B cell (primary cell): ENCODE measurements at regions of chr17 and their contacts with region 1.

Region 1: GRCh38 chr17:74659898-74660297 is 36.4 kb upstream of the CD300E start:
- DNase-seq: no peak
- ATAC-seq: no peak
- H3K4me3 ChIP-seq: no peak overlapping the region
- H3K4me3 Mint-ChIP-seq: no peak overlapping the region
- H3K27ac ChIP-seq: no peak overlapping the region
- H3K27ac Mint-ChIP-seq: no peak overlapping the region
- H3K4me1 ChIP-seq: peaks cover 3 to 5% of the 10 kb centered on the region in 2 donors
- H3K4me1 Mint-ChIP-seq: peaks cover 8% of the 10 kb centered on the region
- H3K27me3 ChIP-seq: peaks cover 0 to 8% (median 2%) of the 10 kb centered on the region in 4 experiments
- H3K27me3 Mint-ChIP-seq: peaks cover 54% of the 10 kb centered on the region
- CTCF ChIP-seq: no peak

Region 2: GRCh38 chr17:73591296-73592078 is 1068.4 kb before region 1 on chr17:
- CTCF ChIA-PET with region 1: no interaction called
- POLR2A ChIA-PET with region 1: interaction called, 10 read pairs
- intact Hi-C with region 1: no loop called
- DNase-seq: peak; percentile 76
- ATAC-seq: peak; percentile 78
- H3K4me3 ChIP-seq: peak overlapping the region in 4 of 5 experiments; percentile 32 to 59 (median 44)
- H3K4me3 Mint-ChIP-seq: peak overlapping the region; percentile 88
- H3K27ac ChIP-seq: peak overlapping the region; percentile 87 to 97
- H3K27ac Mint-ChIP-seq: peak overlapping the region; percentile 97
- H3K4me1 ChIP-seq: peaks cover 100% of the 10 kb centered on the region in 2 donors
- H3K4me1 Mint-ChIP-seq: peaks cover 98% of the 10 kb centered on the region
- H3K27me3 ChIP-seq: no peaks in the 10 kb centered on the region
- H3K27me3 Mint-ChIP-seq: no peaks in the 10 kb centered on the region
- CTCF ChIP-seq: no peak

Region 3: DNA sequence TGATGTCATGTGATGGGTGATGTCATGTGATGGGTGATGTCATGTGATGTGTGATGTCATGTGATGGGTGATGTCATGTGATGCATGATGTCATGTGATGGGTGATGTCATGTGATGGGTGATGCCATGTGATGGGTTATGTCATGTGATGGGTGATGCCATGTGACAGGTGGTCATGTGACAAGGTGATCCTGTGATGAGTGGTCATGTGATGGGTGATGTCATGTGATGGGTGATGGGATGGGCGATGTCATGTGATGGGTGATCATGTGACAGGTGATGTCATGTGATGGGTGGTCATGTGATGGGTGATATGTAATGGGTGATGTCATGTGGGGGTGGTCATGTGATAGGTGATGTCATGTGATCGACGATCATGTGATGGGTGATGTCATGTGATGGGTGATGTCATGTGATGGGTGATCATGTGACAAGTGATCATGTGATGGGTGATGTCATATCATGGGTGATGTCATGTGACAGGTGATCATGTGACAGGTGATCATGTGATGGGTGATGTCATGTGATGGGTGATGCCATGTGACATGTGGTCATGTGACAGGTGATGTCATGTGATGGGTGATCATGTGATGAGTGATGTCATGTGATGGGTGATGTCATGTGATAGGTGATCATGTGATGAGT is 145.8 kb before region 1 on chr17:
- CTCF ChIA-PET with region 1: no interaction called
- POLR2A ChIA-PET with region 1: no interaction called
- intact Hi-C with region 1: no loop called
- DNase-seq: peak; percentile 91
- ATAC-seq: no peak
- H3K4me3 ChIP-seq: no peak overlapping the region
- H3K4me3 Mint-ChIP-seq: peak overlapping the region; percentile 26
- H3K27ac ChIP-seq: peak overlapping the region in 1 of 2 donors; percentile 74
- H3K27ac Mint-ChIP-seq: peak overlapping the region; percentile 96
- H3K4me1 ChIP-seq: peaks cover 14 to 17% of the 10 kb centered on the region in 2 donors
- H3K4me1 Mint-ChIP-seq: peaks cover 17% of the 10 kb centered on the region
- H3K27me3 ChIP-seq: peaks cover 0 to 9% (median 2%) of the 10 kb centered on the region in 4 experiments
- H3K27me3 Mint-ChIP-seq: no peaks in the 10 kb centered on the region
- CTCF ChIP-seq: no peak

Region 4: GRCh38 chr17:74639704-74640151 is 20.2 kb before region 1 on chr17:
- CTCF ChIA-PET with region 1: interaction called, 14 read pairs
- POLR2A ChIA-PET with region 1: no interaction called
- intact Hi-C with region 1: no loop called
- DNase-seq: peak; percentile 71
- ATAC-seq: peak; percentile 70
- H3K4me3 ChIP-seq: peak overlapping the region in 4 of 5 experiments; percentile 3 to 42 (median 9)
- H3K4me3 Mint-ChIP-seq: peak overlapping the region; percentile 79
- H3K27ac ChIP-seq: peak overlapping the region; percentile 38 to 41
- H3K27ac Mint-ChIP-seq: peak overlapping the region; percentile 83
- H3K4me1 ChIP-seq: peaks cover 83 to 85% of the 10 kb centered on the region in 2 donors
- H3K4me1 Mint-ChIP-seq: peaks cover 77% of the 10 kb centered on the region
- H3K27me3 ChIP-seq: peaks cover 0 to 13% (median 2%) of the 10 kb centered on the region in 4 experiments
- H3K27me3 Mint-ChIP-seq: peaks cover 8% of the 10 kb centered on the region
- CTCF ChIP-seq: no peak

Region 5: DNA sequence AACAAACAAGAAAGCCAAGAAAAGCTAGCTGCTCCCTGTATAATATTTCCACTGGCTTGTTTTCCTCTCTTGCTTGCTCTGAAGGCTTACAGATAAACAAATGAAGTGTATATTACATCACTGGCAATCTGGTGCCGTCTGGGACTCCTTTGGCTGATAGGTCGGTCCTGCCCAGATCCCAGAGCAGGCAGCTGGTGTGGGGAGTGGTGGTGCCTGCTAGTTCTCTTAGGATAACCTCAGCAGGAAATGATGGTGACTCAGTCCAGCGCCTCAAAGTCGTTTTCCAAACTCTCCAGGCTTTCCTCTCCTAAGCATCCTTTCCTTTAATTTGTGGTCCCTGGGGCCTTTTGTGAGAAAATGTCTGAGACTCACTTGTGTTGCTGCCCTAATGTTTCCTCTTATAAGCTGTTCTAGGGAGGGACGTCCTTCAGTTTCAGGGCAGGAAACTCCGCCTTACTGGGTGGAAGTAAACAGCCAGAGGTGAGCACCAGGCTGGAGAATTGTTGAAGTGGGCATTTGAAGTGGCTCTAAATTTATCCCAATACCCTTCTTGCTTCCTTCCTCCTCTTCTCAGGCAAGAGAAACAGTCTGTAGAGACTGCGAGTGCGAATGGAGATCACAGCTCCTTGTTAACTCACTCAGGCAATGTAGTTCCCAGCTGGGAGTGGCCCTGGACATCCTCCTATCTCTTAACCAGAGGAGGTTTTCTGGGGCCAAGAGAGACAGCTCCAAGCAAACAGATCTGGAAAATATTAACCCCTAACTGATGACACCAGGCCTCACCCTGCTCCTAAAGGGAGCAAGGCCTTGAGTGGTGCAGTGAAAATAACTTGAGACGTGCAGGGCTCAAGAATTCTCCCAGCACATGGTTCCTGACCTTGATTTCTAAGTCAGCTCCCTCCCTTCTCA is 17.9 kb after region 1 on chr17:
- CTCF ChIA-PET with region 1: interaction called, 33 read pairs
- POLR2A ChIA-PET with region 1: interaction called, 5 read pairs
- intact Hi-C with region 1: no loop called
- DNase-seq: peak; percentile 24
- ATAC-seq: peak; percentile 21
- H3K4me3 ChIP-seq: peak overlapping the region in 1 of 5 experiments; percentile 2
- H3K4me3 Mint-ChIP-seq: peak overlapping the region; percentile 58
- H3K27ac ChIP-seq: no peak overlapping the region
- H3K27ac Mint-ChIP-seq: peak overlapping the region; percentile 71
- H3K4me1 ChIP-seq: peaks cover 22 to 23% of the 10 kb centered on the region in 2 donors
- H3K4me1 Mint-ChIP-seq: peaks cover 27% of the 10 kb centered on the region
- H3K27me3 ChIP-seq: peaks cover 0 to 28% (median 12%) of the 10 kb centered on the region in 4 experiments
- H3K27me3 Mint-ChIP-seq: peaks cover 33% of the 10 kb centered on the region
- CTCF ChIP-seq: no peak

Region 6: GRCh38 chr17:74742153-74742515 is 82.2 kb after region 1 on chr17:
- CTCF ChIA-PET with region 1: interaction called, 344 read pairs
- POLR2A ChIA-PET with region 1: interaction called, 55 read pairs
- intact Hi-C with region 1: no loop called
- DNase-seq: peak; percentile 67
- ATAC-seq: peak; percentile 56
- H3K4me3 ChIP-seq: peak overlapping the region in 2 of 5 experiments; percentile 21 to 34
- H3K4me3 Mint-ChIP-seq: peak overlapping the region; percentile 82
- H3K27ac ChIP-seq: peak overlapping the region; percentile 42 to 62
- H3K27ac Mint-ChIP-seq: peak overlapping the region; percentile 96
- H3K4me1 ChIP-seq: peaks cover 69 to 82% of the 10 kb centered on the region in 2 donors
- H3K4me1 Mint-ChIP-seq: peaks cover 71% of the 10 kb centered on the region
- H3K27me3 ChIP-seq: no peaks in the 10 kb centered on the region
- H3K27me3 Mint-ChIP-seq: no peaks in the 10 kb centered on the region
- CTCF ChIP-seq: no peak

Region 7: DNA sequence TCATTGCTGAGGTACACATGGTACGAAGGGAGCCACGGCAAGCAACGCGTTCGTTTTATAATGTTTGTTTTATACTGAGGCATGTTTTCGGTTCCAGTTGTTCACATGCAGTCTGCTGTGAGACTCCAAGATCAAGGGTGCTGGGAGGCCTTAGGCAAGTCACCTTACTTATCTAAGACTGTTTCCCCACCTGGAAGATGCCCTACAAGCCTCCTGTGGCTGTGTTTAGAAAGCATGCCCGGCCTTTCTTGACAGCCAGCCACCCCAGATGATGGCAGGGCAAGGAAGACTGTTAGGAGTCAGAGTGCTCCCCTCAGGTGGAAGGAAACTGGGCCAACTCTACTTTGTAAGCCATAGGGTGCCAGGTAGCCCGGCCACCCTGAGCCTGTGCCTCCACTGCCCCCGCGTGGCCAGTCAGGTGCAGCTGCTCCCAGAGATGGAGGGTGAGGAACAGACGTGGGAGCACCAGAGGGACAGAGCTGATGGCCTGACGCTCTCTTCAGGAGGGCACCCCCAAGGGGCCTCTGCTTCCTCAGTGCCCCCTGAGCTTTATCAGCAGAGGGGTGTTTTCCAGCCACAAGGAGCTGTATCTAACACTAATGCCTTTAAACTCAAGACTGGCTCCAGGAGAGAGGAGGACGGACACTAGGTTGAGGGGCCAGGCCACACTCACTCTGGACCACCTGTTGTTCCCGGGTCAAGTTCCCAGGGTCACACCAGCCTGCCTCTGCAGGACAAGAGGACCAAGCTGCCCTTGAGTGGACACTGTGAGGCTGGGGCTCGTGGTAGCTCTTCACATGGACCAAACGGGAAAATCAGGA is 110.8 kb after region 1 on chr17:
- CTCF ChIA-PET with region 1: interaction called, 191 read pairs
- POLR2A ChIA-PET with region 1: interaction called, 5 read pairs
- intact Hi-C with region 1: loop called (anchors 1 kb)
- DNase-seq: peak; percentile 78
- ATAC-seq: peak; percentile 94
- H3K4me3 ChIP-seq: no peak overlapping the region
- H3K4me3 Mint-ChIP-seq: no peak overlapping the region
- H3K27ac ChIP-seq: no peak overlapping the region
- H3K27ac Mint-ChIP-seq: peak overlapping the region; percentile 50
- H3K4me1 ChIP-seq: peaks cover 6 to 7% of the 10 kb centered on the region in 2 donors
- H3K4me1 Mint-ChIP-seq: peaks cover 17% of the 10 kb centered on the region
- H3K27me3 ChIP-seq: no peaks in the 10 kb centered on the region
- H3K27me3 Mint-ChIP-seq: no peaks in the 10 kb centered on the region
- CTCF ChIP-seq: peak; percentile 75

Region 8: GRCh38 chr17:74864866-74865395 is 205.0 kb after region 1 on chr17:
- CTCF ChIA-PET with region 1: interaction called, 27 read pairs
- POLR2A ChIA-PET with region 1: interaction called, 3 read pairs
- intact Hi-C with region 1: loop called (anchors 1 kb)
- DNase-seq: peak; percentile 81
- ATAC-seq: peak; percentile 78
- H3K4me3 ChIP-seq: no peak overlapping the region
- H3K4me3 Mint-ChIP-seq: no peak overlapping the region
- H3K27ac ChIP-seq: no peak overlapping the region
- H3K27ac Mint-ChIP-seq: no peak overlapping the region
- H3K4me1 ChIP-seq: peaks cover 25 to 26% of the 10 kb centered on the region in 2 donors
- H3K4me1 Mint-ChIP-seq: peaks cover 18% of the 10 kb centered on the region
- H3K27me3 ChIP-seq: peaks cover 0 to 36% (median 11%) of the 10 kb centered on the region in 4 experiments
- H3K27me3 Mint-ChIP-seq: peaks cover 16% of the 10 kb centered on the region
- CTCF ChIP-seq: peak; percentile 94